ENCODE measurements at regions of chr7 and their contacts with region 1.

Region 1: GRCh38 chr7:139829025-139829774 is at the start of gene TBXAS1:
- DNase-seq: peak in 4 of 5 donors; percentile 18 to 35 (median 28)
- H3K4me3 ChIP-seq: peak within 1 kb of the TSS; percentile 7 to 18
- H3K4me3 Mint-ChIP-seq: peak within 1 kb of the TSS; percentile 83 to 90 (median 87)
- H3K27ac ChIP-seq: peak within 1 kb of the TSS; percentile 36
- H3K27ac Mint-ChIP-seq: peak within 1 kb of the TSS; percentile 84 to 97 (median 93)
- H3K4me1 ChIP-seq: peaks cover 28% of the 10 kb centered on the region
- H3K4me1 Mint-ChIP-seq: peaks cover 24 to 42% (median 31%) of the 10 kb centered on the region in 4 donors
- H3K27me3 ChIP-seq: no peaks in the 10 kb centered on the region
- H3K27me3 Mint-ChIP-seq: peaks cover 2 to 3% of the 10 kb centered on the region in 2 donors
- total RNA-seq, gene TBXAS1: 16.6 to 18.0 TPM

Region 2: GRCh38 chr7:139767561-139767982 is 61.6 kb before region 1 on chr7:
- CTCF ChIA-PET with region 1: no interaction called
- POLR2A ChIA-PET with region 1: interaction called, 17 read pairs
- intact Hi-C with region 1: no loop called
- DNase-seq: peak in 4 of 5 donors; percentile 56 to 67 (median 60)
- H3K4me3 ChIP-seq: peak overlapping the region in 1 of 2 donors; percentile 27
- H3K4me3 Mint-ChIP-seq: peak overlapping the region; percentile 0 to 93 (median 60)
- H3K27ac ChIP-seq: peak overlapping the region; percentile 56
- H3K27ac Mint-ChIP-seq: peak overlapping the region; percentile 84 to 91 (median 88)
- H3K4me1 ChIP-seq: peaks cover 58% of the 10 kb centered on the region
- H3K4me1 Mint-ChIP-seq: peaks cover 64 to 88% (median 77%) of the 10 kb centered on the region in 4 donors
- H3K27me3 ChIP-seq: no peaks in the 10 kb centered on the region
- H3K27me3 Mint-ChIP-seq: no peaks in the 10 kb centered on the region

Region 3: GRCh38 chr7:139808427-139808826 is 20.8 kb before region 1 on chr7:
- CTCF ChIA-PET with region 1: no interaction called
- POLR2A ChIA-PET with region 1: no interaction called
- intact Hi-C with region 1: no loop called
- DNase-seq: no peak
- H3K4me3 ChIP-seq: no peak overlapping the region
- H3K4me3 Mint-ChIP-seq: no peak overlapping the region
- H3K27ac ChIP-seq: no peak overlapping the region
- H3K27ac Mint-ChIP-seq: no peak overlapping the region
- H3K4me1 ChIP-seq: no peaks in the 10 kb centered on the region
- H3K4me1 Mint-ChIP-seq: no peaks in the 10 kb centered on the region
- H3K27me3 ChIP-seq: no peaks in the 10 kb centered on the region
- H3K27me3 Mint-ChIP-seq: peaks cover 0 to 7% of the 10 kb centered on the region in 2 donors

Region 4: DNA sequence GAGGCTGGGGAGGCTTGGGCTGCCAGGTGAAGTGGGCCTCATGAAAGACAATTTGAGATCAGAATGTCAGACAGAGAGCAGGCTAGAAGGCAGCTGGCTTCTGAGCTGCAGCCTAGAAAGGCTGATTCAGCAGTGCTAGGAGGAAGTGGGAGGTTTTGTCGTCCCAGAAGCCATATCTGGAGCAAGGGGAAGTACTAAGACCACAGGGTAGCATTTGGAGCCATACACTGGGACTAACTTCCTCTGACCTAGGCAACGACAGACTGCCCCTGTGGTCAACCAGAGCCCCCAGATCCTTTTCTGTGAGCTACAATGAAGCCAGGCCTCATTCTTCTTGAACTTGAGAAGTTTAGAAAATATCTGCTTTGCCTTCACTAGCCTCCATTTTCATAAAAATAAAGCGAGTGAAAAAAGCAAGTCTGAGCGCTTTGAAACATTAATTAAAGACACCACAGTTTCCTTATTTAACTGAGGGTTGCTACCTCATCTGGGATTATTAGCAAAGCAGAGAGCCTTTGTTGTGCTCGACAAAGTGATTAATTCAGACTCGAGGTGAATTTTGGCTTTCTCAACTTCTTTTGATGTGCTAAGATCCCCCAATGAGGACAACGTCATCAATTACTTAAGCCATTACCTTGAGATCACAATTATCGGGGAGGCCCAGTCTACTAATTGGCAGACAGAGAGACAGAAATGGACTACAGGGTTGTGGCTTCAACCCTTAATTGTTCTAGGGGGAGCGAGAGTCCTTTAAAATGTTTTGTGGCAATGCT is 26.5 kb after region 1 on chr7:
- CTCF ChIA-PET with region 1: interaction called, 5 read pairs
- POLR2A ChIA-PET with region 1: interaction called, 11 read pairs
- intact Hi-C with region 1: no loop called
- DNase-seq: peak in 2 of 5 donors; percentile 11 to 15
- H3K4me3 ChIP-seq: no peak overlapping the region
- H3K4me3 Mint-ChIP-seq: peak overlapping the region in 7 of 8 donors; percentile 39 to 71 (median 59)
- H3K27ac ChIP-seq: no peak overlapping the region
- H3K27ac Mint-ChIP-seq: peak overlapping the region; percentile 54 to 95 (median 75)
- H3K4me1 ChIP-seq: peaks cover 25% of the 10 kb centered on the region
- H3K4me1 Mint-ChIP-seq: peaks cover 18 to 46% (median 35%) of the 10 kb centered on the region in 4 donors
- H3K27me3 ChIP-seq: no peaks in the 10 kb centered on the region
- H3K27me3 Mint-ChIP-seq: no peaks in the 10 kb centered on the region

Region 5: DNA sequence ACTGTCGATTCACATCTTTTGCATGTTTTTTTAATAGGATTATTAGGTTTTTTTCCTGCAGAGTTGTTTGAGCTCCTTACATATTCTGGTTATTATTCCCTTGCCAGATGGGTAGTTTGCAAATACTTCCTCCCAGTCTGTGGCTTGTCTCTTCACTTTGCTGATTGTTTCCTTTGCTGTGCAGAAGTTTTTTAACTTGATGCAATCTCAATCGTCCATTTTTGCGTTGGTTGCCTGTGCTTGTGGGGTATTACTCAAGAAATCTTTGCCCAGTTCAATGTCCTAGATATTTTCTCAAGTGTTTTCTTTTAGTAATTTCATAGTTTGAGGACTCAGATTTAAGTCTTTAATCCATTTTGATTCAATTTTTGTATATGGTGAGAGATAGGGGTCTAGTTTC is 95.3 kb after region 1 on chr7:
- CTCF ChIA-PET with region 1: no interaction called
- POLR2A ChIA-PET with region 1: no interaction called
- intact Hi-C with region 1: no loop called
- DNase-seq: no peak
- H3K4me3 ChIP-seq: no peak overlapping the region
- H3K4me3 Mint-ChIP-seq: no peak overlapping the region
- H3K27ac ChIP-seq: no peak overlapping the region
- H3K27ac Mint-ChIP-seq: no peak overlapping the region
- H3K4me1 ChIP-seq: no peaks in the 10 kb centered on the region
- H3K4me1 Mint-ChIP-seq: no peaks in the 10 kb centered on the region
- H3K27me3 ChIP-seq: no peaks in the 10 kb centered on the region
- H3K27me3 Mint-ChIP-seq: peaks cover under 1 to 3% of the 10 kb centered on the region in 2 donors

Measured in CD4-positive, alpha-beta memory T cell (primary cell).